Natural killer cell (primary cell): ENCODE measurements at regions of chr5 and their contacts with region 1.

Region 1: GRCh38 chr5:96934708-96935558 is 947 bp upstream of the LNPEP start:
- DNase-seq: peak; percentile 96 to 97
- ATAC-seq: peak; percentile 66 to 88 (median 76)
- H3K4me3 ChIP-seq: peak overlapping the region; percentile 93
- H3K4me3 Mint-ChIP-seq: peak overlapping the region; percentile 91
- H3K27ac ChIP-seq: peak overlapping the region; percentile 91
- H3K27ac Mint-ChIP-seq: peak overlapping the region; percentile 93 to 94
- H3K4me1 ChIP-seq: peaks cover 19% of the 10 kb centered on the region
- H3K4me1 Mint-ChIP-seq: peaks cover 77 to 82% of the 10 kb centered on the region in 2 donors
- H3K27me3 ChIP-seq: no peaks in the 10 kb centered on the region
- H3K27me3 Mint-ChIP-seq: no peaks in the 10 kb centered on the region
- CTCF ChIP-seq: no peak

Region 2: DNA sequence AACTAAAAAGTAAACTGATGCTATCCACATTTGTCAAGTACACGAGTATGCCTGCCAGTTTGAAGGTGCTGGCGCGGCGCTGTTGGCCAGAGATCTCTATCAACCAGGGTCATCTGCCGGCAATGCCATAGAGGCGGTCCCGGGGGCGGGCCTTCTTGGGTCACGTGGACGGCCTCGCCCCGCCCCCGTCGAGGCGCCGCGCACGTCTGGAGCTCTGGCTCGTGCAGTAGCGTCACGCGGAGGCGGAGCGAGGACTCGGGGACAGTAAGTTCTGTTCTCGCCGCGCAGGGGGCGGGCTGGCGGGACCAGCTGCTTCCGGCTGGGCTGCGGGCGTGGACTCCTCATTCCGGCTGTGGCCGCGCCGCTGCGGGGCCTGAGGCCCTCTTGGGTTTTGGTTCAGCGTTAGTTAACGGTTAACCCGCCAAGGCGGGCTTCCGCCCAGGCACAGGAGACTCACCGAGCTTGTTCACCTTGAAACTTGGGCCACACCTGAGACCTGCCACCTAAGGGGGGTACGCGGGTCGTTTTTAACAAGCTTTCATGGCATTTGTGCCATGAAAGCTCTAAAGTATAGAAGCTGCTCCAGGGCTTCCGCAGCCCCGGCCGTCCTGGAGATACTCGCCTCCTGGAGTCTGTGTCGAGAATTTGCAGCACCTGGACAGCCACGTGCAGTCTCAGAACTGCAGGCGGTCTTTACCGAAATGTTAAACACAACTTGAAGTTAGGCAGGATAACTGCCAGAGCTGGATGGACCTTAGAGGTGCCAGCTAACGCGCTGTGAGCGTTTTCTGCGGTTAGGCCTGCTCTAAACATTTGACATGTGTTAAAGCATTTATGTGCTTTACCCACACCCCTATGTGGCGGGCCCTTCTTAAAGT is 1288.1 kb before region 1 on chr5 and contains the start of gene RFESD:
- intact Hi-C with region 1: loop called (anchors 5 kb)
- DNase-seq: peak; percentile 96 to 98
- ATAC-seq: peak; percentile 95 to 99 (median 96)
- H3K4me3 ChIP-seq: peak within 1 kb of the TSS; percentile 76
- H3K4me3 Mint-ChIP-seq: peak within 1 kb of the TSS; percentile 83
- H3K27ac ChIP-seq: peak within 1 kb of the TSS; percentile 91
- H3K27ac Mint-ChIP-seq: peak within 1 kb of the TSS; percentile 85 to 95
- H3K4me1 ChIP-seq: peaks cover 15% of the 10 kb centered on the region
- H3K4me1 Mint-ChIP-seq: peaks cover 8 to 16% of the 10 kb centered on the region in 2 donors
- H3K27me3 ChIP-seq: no peaks in the 10 kb centered on the region
- H3K27me3 Mint-ChIP-seq: no peaks in the 10 kb centered on the region
- CTCF ChIP-seq: no peak
- total RNA-seq, gene RFESD: 0.96 to 1.5 (median 1.4) TPM

Region 3: DNA sequence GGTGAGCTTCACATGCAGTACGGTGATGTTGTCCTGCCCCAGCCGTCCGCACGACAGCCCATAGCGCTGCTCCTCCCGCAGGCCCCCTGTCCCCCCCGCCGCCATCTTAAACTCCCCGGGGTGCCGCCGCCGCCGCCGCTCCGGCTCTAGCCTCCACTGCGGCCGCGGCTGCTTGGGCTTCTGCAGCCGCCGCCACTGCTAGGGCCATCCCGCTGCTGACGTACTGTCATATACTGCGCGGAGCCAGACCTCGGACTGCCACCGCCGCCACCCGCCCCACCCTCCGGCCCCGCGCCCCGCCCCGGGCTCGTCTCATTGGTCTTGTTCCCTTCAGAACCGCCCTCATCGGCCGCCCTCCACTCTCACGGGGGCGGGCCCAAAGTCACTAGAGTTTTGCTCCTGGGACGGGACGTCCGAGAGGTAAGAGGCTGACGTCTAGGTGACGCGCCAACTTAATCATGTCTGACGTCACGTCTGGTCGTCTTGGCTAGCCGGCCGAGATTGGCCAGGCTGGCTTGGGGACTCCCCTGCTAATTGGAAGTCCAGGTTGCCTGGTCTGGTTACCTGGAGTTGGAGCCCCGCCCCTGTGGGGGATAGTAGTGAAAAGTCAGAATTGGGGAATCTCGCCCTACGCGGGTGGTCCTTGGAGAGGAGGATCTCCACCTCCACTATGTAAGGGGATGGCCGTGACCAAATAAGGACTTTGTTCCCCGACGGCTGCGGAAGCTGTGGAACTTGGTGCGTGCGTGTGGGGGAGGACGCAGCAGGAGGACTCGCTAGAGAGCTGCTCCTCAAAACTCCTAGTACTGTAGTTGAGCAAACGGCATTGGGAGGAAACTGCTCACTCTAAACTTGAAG is 973.1 kb before region 1 on chr5 and contains the start of gene ELL2:
- intact Hi-C with region 1: loop called (anchors 5 kb)
- DNase-seq: peak; percentile 93 to 98
- ATAC-seq: peak; percentile 83 to 94 (median 85)
- H3K4me3 ChIP-seq: peak within 1 kb of the TSS; percentile 96
- H3K4me3 Mint-ChIP-seq: peak within 1 kb of the TSS; percentile 95
- H3K27ac ChIP-seq: peak within 1 kb of the TSS; percentile 96
- H3K27ac Mint-ChIP-seq: peak within 1 kb of the TSS; percentile 99
- H3K4me1 ChIP-seq: peaks cover 30% of the 10 kb centered on the region
- H3K4me1 Mint-ChIP-seq: peaks cover 31 to 32% of the 10 kb centered on the region in 2 donors
- H3K27me3 ChIP-seq: no peaks in the 10 kb centered on the region
- H3K27me3 Mint-ChIP-seq: peaks cover 14 to 16% of the 10 kb centered on the region in 2 donors
- CTCF ChIP-seq: no peak
- total RNA-seq, gene ELL2: 52.8 to 78.2 (median 69.4) TPM

Region 4: DNA sequence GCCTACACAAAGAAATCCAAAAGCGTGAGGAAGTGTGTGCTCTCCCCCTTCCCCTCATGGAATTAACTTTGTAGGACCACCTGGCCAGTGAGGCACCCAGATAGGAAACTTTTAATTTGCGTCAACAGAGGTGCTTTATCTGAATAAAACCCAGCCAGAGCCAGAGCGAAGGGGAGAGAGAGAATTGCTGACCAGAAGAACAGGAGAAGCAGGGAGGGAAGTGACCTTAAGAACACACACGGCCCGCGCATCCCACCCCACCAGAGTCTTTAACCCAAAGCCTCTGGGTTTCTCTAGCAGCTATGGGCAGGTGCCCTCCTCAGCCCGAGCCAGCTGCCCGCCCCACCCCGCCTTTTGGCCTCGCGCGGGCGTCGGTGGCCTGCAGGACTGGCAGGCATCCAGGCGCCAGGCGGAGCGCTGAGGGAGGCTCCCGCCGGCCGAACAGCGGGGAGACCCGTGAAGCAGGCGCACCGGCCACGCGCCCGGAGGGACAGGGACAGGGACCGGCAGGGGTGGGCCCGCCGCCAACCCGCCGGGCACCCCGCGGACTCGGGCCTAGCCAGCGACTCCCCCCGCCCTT is 127.8 kb before region 1 on chr5:
- intact Hi-C with region 1: loop called (anchors 2 kb)
- DNase-seq: no peak
- ATAC-seq: no peak
- H3K4me3 ChIP-seq: peak overlapping the region; percentile 73
- H3K4me3 Mint-ChIP-seq: peak overlapping the region; percentile 99
- H3K27ac ChIP-seq: peak overlapping the region; percentile 93
- H3K27ac Mint-ChIP-seq: peak overlapping the region; percentile 99
- H3K4me1 ChIP-seq: peaks cover 36% of the 10 kb centered on the region
- H3K4me1 Mint-ChIP-seq: peaks cover 56 to 57% of the 10 kb centered on the region in 2 donors
- H3K27me3 ChIP-seq: no peaks in the 10 kb centered on the region
- H3K27me3 Mint-ChIP-seq: no peaks in the 10 kb centered on the region
- CTCF ChIP-seq: no peak

Region 5: GRCh38 chr5:96885518-96886338 is 49.2 kb before region 1 on chr5:
- intact Hi-C with region 1: no loop called
- DNase-seq: peak in 1 of 2 donors; percentile 73
- ATAC-seq: peak; percentile 69 to 86 (median 71)
- H3K4me3 ChIP-seq: no peak overlapping the region
- H3K4me3 Mint-ChIP-seq: peak overlapping the region; percentile 67
- H3K27ac ChIP-seq: peak overlapping the region; percentile 76
- H3K27ac Mint-ChIP-seq: peak overlapping the region; percentile 88 to 89
- H3K4me1 ChIP-seq: peaks cover 38% of the 10 kb centered on the region
- H3K4me1 Mint-ChIP-seq: peaks cover 49 to 62% of the 10 kb centered on the region in 2 donors
- H3K27me3 ChIP-seq: no peaks in the 10 kb centered on the region
- H3K27me3 Mint-ChIP-seq: no peaks in the 10 kb centered on the region
- CTCF ChIP-seq: no peak

Region 6: DNA sequence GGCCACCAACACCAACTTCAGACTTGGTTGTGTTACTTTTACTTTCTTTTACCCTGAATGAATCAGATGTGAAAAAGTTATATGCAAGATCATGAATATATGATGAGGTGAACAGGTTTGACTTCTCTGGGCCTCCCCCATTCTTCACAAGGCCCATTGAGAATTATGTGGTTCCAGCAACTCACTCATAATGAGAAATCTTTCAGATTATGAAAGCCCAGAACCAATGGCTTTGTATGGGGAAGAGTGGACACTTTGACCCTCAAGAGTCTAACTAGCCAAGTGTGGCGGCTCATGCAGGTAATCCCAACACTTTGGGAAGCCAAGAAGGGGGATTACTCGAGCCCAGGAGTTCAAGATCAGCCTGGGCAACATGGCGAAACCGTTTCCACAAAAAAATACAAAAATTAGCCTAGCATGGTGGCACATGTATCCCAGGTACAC is 15.2 kb before region 1 on chr5:
- intact Hi-C with region 1: loop called (anchors 1 kb)
- DNase-seq: no peak
- ATAC-seq: peak; percentile 76 to 96 (median 93)
- H3K4me3 ChIP-seq: no peak overlapping the region
- H3K4me3 Mint-ChIP-seq: no peak overlapping the region
- H3K27ac ChIP-seq: no peak overlapping the region
- H3K27ac Mint-ChIP-seq: peak overlapping the region; percentile 45 to 70
- H3K4me1 ChIP-seq: peaks cover 5% of the 10 kb centered on the region
- H3K4me1 Mint-ChIP-seq: peaks cover 14% of the 10 kb centered on the region in 2 donors
- H3K27me3 ChIP-seq: no peaks in the 10 kb centered on the region
- H3K27me3 Mint-ChIP-seq: no peaks in the 10 kb centered on the region
- CTCF ChIP-seq: no peak

Region 7: DNA sequence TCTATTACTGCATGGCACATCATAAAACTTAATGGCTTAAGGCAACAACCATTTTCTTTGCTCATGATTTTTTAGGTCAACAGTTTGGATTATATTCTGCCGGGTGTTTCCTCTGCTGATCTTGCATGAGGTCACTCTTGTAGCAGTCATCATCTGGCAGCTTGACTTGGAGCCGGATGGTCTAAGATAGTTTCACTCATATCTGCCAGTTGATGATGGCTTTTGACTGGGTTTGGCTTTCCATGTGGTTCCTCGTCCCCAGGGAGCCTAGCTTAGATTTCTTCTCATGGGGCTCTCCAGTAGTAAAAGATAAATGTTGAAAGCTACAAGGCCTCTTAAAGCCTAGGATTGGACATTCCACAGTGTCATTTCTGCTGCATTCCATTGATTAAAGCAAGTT is 28.3 kb after region 1 on chr5:
- intact Hi-C with region 1: loop called (anchors 2 kb)
- DNase-seq: peak in 1 of 2 donors; percentile 54
- ATAC-seq: peak; percentile 69 to 77 (median 70)
- H3K4me3 ChIP-seq: no peak overlapping the region
- H3K4me3 Mint-ChIP-seq: peak overlapping the region; percentile 76
- H3K27ac ChIP-seq: peak overlapping the region; percentile 36
- H3K27ac Mint-ChIP-seq: peak overlapping the region; percentile 85 to 94
- H3K4me1 ChIP-seq: peaks cover 33% of the 10 kb centered on the region
- H3K4me1 Mint-ChIP-seq: peaks cover 61 to 70% of the 10 kb centered on the region in 2 donors
- H3K27me3 ChIP-seq: no peaks in the 10 kb centered on the region
- H3K27me3 Mint-ChIP-seq: no peaks in the 10 kb centered on the region
- CTCF ChIP-seq: no peak

Region 8: GRCh38 chr5:97591781-97592180 is 656.8 kb after region 1 on chr5:
- intact Hi-C with region 1: no loop called
- DNase-seq: no peak
- ATAC-seq: no peak
- H3K4me3 ChIP-seq: no peak overlapping the region
- H3K4me3 Mint-ChIP-seq: no peak overlapping the region
- H3K27ac ChIP-seq: no peak overlapping the region
- H3K27ac Mint-ChIP-seq: no peak overlapping the region
- H3K4me1 ChIP-seq: no peaks in the 10 kb centered on the region
- H3K4me1 Mint-ChIP-seq: no peaks in the 10 kb centered on the region
- H3K27me3 ChIP-seq: no peaks in the 10 kb centered on the region
- H3K27me3 Mint-ChIP-seq: no peaks in the 10 kb centered on the region
- CTCF ChIP-seq: no peak

Region 9: GRCh38 chr5:98928873-98929696 is 1994.2 kb after region 1 on chr5 and contains the start of gene CHD1:
- intact Hi-C with region 1: loop called (anchors 5 kb)
- DNase-seq: peak; percentile 95 to 98
- ATAC-seq: peak; percentile 67 to 88 (median 74)
- H3K4me3 ChIP-seq: peak within 1 kb of the TSS; percentile 79
- H3K4me3 Mint-ChIP-seq: peak within 1 kb of the TSS; percentile 99
- H3K27ac ChIP-seq: peak within 1 kb of the TSS; percentile 98
- H3K27ac Mint-ChIP-seq: peak within 1 kb of the TSS; percentile 97 to 98
- H3K4me1 ChIP-seq: peaks cover 17% of the 10 kb centered on the region
- H3K4me1 Mint-ChIP-seq: peaks cover 44 to 60% of the 10 kb centered on the region in 2 donors
- H3K27me3 ChIP-seq: no peaks in the 10 kb centered on the region
- H3K27me3 Mint-ChIP-seq: no peaks in the 10 kb centered on the region
- CTCF ChIP-seq: no peak
- total RNA-seq, gene CHD1: 116 to 127 (median 117) TPM